Left colon (tissue), 2 donors: ENCODE measurements at regions of chr7 and their contacts with region 1.

Region 1: DNA sequence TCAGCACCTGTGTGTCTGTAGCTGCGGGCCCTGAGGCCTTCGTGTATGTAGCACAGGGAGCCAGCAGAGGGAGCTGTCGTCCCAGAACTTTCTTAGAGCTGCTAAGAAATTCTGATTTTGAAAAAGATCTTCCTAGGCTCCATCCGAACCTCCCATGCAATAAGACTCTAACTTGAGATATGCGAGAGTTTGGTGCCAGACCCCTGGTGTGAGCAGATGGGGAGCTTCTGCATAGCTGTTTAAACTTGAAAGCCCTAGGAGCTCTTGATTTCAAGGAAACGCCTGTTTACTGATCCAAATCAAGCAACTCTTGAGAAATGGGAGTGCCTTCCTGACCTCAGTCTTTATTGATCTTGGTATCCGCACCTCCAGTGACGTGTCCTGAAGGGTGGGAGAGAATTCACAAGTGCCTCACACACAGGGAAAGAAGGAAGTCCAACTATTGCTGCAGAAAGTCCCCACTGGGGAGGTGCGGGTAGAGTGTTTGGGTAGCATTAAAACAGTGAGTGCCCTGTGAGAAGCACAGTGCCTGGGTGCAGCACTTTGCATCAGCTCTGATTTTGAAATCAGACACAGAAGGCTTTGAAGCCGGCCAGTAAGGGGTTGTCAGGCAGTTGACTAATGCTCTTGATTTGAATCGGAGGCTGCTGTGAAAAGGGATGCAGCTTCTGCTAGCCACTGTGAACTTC is 66.4 kb upstream of the STRIP2 start:
- DNase-seq: peak; percentile 87
- ATAC-seq: peak; percentile 86

Region 2: GRCh38 chr7:129471402-129471827 is 103.6 kb after region 1 on chr7:
- intact Hi-C with region 1: loop called in 1 of 2 experiments (anchors 5 kb)
- DNase-seq: no peak
- ATAC-seq: no peak